Left ventricle myocardium inferior (tissue), 1 donor: ENCODE measurements at regions of chr2 and their contacts with region 1.

Region 1: GRCh38 chr2:118882709-118883210 is 35.3 kb upstream of the EN1 start:
- DNase-seq: peak; percentile 36
- H3K4me3 ChIP-seq: peak overlapping the region; percentile 35
- H3K27ac ChIP-seq: no peak overlapping the region
- H3K4me1 ChIP-seq: peaks cover 6% of the 10 kb centered on the region
- H3K27me3 ChIP-seq: peaks cover 68% of the 10 kb centered on the region
- CTCF ChIP-seq: peak; percentile 83

Region 2: DNA sequence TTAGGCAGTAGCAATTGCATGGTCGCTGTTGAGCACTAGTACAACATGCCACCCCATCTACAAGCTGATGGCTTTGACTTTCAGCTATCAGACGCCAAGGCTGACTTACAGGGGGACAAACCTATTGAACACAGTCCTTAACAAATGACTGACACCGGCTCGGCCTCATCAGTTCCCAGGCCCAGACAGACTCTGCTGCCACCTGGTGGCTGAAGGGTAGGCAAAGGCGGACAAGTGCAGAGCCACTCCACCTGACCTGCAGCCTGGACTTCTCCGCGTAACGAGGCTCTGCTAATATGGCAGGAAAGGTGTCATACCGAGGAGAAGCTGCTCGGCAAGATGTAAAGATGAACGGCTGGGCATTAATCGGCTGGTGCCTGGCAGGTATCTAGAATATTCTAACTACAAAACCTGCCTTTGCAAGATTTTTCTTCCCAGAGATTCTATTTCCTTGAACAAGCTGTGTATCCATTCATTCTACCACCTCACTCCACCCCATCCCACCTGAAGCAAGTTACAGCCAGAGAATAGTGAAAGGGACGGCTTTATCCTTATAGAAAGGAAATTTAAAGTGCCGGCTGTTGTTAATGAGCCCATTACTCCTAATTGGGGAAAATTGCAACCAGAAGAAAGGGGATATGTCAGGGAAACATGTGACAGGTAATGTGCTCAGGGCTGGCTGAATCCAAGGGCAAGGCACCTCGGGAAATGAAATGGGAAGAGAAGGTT is 408.3 kb after region 1 on chr2:
- intact Hi-C with region 1: loop called (anchors 5 kb)
- DNase-seq: peak; percentile 73
- H3K4me3 ChIP-seq: no peak overlapping the region
- H3K27ac ChIP-seq: no peak overlapping the region
- H3K4me1 ChIP-seq: peaks cover 8% of the 10 kb centered on the region
- H3K27me3 ChIP-seq: no peaks in the 10 kb centered on the region
- CTCF ChIP-seq: peak; percentile 92